Posterior vena cava (tissue), 2 donors: ENCODE measurements at regions of chr12 and their contacts with region 1.

Region 1: GRCh38 chr12:98379106-98379505 is 136.3 kb upstream of the TMPO start:
- DNase-seq: no peak

Region 2: GRCh38 chr12:98174428-98174809 is 204.7 kb before region 1 on chr12:
- intact Hi-C with region 1: no loop called
- DNase-seq: no peak

Region 3: GRCh38 chr12:98828802-98829600 is 449.9 kb after region 1 on chr12:
- intact Hi-C with region 1: loop called in 1 of 2 experiments (anchors 5 kb)
- DNase-seq: no peak